SK-N-SH (cell line): ENCODE measurements at regions of chr1 and their contacts with region 1.

Region 1: DNA sequence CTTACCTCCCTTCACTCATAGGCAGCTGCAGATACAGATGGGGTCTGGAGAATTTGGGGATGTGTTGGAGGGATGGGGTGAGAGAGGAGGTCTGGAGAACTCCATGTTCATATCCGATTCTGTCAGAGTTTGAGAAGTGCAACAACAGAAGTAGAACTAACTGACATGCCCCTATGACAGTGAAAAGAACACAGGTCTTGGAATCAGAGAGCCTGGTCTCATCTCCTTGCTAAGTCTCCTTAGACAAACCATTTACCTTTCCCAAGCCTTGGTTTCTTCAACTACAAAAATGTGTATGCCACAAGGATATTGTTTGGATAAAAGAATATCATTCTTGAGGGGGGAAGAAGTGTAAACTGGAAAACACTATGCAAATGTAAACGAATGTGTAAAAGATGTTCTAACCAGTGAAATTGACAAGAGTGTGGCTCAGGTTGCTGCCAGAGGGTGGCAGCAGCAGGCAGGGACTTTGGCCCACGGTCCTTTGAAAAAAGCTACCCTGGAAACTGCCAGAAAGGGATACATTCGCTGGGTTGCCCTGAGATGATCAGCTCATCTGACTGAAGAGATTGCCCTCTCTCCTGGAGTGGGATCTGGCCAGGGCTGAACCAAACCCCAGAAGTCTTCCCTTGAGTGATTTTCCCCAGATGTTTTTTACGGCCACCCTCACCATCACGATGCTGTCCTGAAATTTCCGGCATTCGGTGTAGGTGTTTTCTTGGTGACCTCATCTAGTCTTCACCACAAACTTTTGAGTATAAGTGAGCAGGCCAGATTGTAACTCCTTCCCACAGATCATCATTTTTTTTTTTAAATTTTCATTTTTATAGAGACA is 17.0 kb upstream of the CD2 start:
- DNase-seq: peak; percentile 83
- H3K4me3 ChIP-seq: no peak overlapping the region
- H3K27ac ChIP-seq: no peak overlapping the region
- H3K4me1 ChIP-seq: peaks cover 0 to 10% of the 10 kb centered on the region in 2 experiments; a peak in 2 of 4 replicates
- H3K27me3 ChIP-seq: no peaks in the 10 kb centered on the region
- CTCF ChIP-seq: peak; percentile 78
- EP300 ChIP-seq: no peak
- RAD21 ChIP-seq: peak; percentile 94

Region 2: DNA sequence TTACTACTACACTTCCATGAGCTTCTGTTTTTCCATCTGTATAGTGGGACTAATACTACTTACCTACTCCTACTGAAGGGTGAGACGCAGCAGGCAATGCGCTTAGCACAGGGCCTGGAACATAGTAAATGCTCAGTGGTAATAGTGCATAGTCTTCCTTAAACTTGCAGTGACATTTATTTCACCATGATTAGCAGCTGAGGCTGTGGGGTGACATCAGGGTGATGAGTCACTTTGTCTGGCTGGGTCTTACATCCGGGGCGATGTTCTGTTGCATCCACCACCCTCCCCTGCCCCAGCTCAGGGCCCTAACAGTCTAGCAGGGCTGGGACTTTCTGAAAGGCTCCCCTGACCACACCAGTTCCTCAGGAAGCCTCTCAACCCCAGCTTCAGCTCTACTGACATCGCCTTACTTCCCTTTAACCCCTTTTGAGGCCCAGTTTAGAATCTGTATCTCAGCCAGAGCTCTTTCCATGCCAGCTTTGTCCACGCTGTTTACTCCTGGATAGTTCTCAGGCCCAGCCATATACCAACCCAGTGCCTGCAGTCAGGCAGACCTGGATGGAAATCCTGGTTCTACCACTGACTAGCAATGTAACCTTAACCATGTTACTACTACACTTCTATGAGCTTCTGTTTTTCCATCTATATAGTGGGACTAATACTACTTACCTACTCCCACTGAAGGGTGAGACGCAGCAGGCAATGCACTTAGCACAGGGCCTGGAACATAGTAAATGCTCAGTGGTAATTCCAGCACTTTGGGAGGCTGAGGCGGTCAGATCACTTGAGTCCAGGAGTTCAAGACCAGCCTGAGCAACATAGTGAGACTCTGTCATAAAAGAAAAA is 232.7 kb before region 1 on chr1:
- CTCF ChIA-PET with region 1: no interaction called
- POLR2A ChIA-PET with region 1: no interaction called
- DNase-seq: no peak
- H3K4me3 ChIP-seq: no peak overlapping the region
- H3K27ac ChIP-seq: peak overlapping the region in 1 of 2 experiments; percentile 50; a peak in 3 of 4 replicates
- H3K4me1 ChIP-seq: peaks cover 7 to 21% of the 10 kb centered on the region in 2 experiments; a peak in 3 of 4 replicates
- H3K27me3 ChIP-seq: no peaks in the 10 kb centered on the region
- CTCF ChIP-seq: no peak
- EP300 ChIP-seq: no peak
- RAD21 ChIP-seq: no peak

Region 3: DNA sequence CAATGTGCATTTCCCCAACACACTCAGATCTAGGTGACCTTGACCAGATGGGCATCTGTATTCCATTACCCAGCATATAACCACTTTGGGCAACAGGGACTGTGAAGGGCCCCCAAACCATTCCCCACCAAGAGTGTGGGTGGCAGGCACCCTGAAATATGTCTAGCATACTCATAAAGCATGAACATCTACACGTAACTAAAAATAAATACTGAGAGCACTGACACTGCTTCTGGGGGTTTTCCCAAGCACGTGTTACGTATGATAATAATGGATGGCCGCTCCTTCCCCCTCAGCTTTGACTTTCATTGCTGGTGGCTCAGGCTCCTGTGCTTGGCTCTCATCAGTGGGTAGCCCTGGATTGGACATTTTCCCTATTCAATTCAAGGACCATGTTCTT is 108.8 kb before region 1 on chr1:
- CTCF ChIA-PET with region 1: no interaction called
- POLR2A ChIA-PET with region 1: no interaction called
- DNase-seq: no peak
- H3K4me3 ChIP-seq: no peak overlapping the region
- H3K27ac ChIP-seq: peak overlapping the region in 1 of 2 experiments; percentile 39; a peak in 1 of 4 replicates
- H3K4me1 ChIP-seq: peaks cover 0 to 47% of the 10 kb centered on the region in 2 experiments; a peak in 1 of 4 replicates
- H3K27me3 ChIP-seq: no peaks in the 10 kb centered on the region
- CTCF ChIP-seq: no peak
- EP300 ChIP-seq: no peak
- RAD21 ChIP-seq: no peak

Region 4: DNA sequence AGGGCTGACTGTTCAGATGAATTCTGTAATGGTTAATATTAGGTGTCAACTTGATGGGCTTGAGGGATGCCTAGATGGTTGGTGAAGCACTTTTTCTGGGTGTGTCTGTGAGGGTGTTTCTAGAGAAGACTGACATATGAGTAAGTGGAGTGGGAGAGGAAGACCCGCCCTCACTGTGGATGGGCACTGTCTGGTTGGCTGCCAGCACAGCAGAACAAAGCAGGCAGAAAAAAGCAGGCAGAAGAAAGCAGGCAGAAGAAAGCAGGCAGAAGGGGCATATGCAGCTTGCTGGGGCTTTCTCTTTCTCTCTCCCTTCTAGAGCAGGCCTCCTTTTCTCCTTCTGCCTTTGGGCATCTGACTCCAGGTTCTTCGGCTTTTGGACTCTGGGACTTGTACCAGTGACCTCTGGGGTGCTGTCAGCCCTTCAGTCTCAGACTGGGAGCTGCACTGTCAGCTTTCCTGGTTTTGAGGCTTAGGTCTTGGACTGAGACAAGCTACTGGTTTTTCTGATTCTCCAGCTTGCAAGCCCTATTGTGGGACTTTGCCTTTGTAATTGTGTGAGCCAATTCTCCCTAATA is 25.9 kb before region 1 on chr1:
- CTCF ChIA-PET with region 1: interaction called, 10 read pairs
- POLR2A ChIA-PET with region 1: no interaction called
- DNase-seq: peak; percentile 48
- H3K4me3 ChIP-seq: no peak overlapping the region
- H3K27ac ChIP-seq: peak overlapping the region in 1 of 2 experiments; percentile 75; a peak in 1 of 4 replicates
- H3K4me1 ChIP-seq: peaks cover 0 to 38% of the 10 kb centered on the region in 2 experiments; a peak in 3 of 4 replicates
- H3K27me3 ChIP-seq: no peaks in the 10 kb centered on the region
- CTCF ChIP-seq: no peak
- EP300 ChIP-seq: no peak
- RAD21 ChIP-seq: no peak

Region 5: DNA sequence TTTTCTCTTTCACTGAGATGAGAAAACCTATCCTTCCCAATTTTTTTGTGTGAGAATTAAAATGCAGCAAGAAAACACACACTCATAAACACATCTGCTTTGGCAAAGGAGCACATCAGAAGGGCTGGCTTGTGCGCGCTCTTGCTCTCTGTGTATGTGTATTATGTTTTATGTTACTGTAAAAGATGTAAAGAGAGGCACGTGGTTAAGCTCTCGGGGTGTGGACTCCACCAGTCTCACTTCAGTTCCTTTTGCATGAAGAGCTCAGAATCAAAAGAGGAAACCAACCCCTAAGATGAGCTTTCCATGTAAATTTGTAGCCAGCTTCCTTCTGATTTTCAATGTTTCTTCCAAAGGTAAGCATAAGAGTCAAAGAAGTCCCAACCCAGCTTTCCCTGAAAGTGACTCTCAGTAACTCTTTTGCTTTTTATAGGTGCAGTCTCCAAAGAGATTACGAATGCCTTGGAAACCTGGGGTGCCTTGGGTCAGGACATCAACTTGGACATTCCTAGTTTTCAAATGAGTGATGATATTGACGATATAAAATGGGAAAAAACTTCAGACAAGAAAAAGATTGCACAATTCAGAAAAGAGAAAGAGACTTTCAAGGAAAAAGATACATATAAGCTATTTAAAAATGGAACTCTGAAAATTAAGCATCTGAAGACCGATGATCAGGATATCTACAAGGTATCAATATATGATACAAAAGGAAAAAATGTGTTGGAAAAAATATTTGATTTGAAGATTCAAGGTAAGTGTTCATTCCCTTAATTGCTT is 17.2 kb after region 1 on chr1 and contains the start of gene CD2:
- CTCF ChIA-PET with region 1: interaction called, 16 read pairs
- POLR2A ChIA-PET with region 1: no interaction called
- DNase-seq: no peak
- H3K4me3 ChIP-seq: no peak within 1 kb of the TSS
- H3K27ac ChIP-seq: no peak within 1 kb of the TSS
- H3K4me1 ChIP-seq: no peaks in the 10 kb centered on the region
- H3K27me3 ChIP-seq: no peaks in the 10 kb centered on the region
- CTCF ChIP-seq: no peak
- EP300 ChIP-seq: no peak
- RAD21 ChIP-seq: no peak
- polyA plus RNA-seq, gene CD2: not detected in 2 replicates

Region 6: GRCh38 chr1:116878804-116879477 is 141.7 kb after region 1 on chr1:
- CTCF ChIA-PET with region 1: interaction called, 11 read pairs
- POLR2A ChIA-PET with region 1: no interaction called
- DNase-seq: peak; percentile 71
- H3K4me3 ChIP-seq: peak overlapping the region; percentile 41 to 56
- H3K27ac ChIP-seq: peak overlapping the region; percentile 80 to 99
- H3K4me1 ChIP-seq: peaks cover 14 to 22% of the 10 kb centered on the region in 2 experiments
- H3K27me3 ChIP-seq: no peaks in the 10 kb centered on the region
- CTCF ChIP-seq: no peak
- EP300 ChIP-seq: peak in 1 of 2 experiments; percentile 46; a peak in 1 of 4 replicates
- RAD21 ChIP-seq: peak; percentile 61

Region 7: DNA sequence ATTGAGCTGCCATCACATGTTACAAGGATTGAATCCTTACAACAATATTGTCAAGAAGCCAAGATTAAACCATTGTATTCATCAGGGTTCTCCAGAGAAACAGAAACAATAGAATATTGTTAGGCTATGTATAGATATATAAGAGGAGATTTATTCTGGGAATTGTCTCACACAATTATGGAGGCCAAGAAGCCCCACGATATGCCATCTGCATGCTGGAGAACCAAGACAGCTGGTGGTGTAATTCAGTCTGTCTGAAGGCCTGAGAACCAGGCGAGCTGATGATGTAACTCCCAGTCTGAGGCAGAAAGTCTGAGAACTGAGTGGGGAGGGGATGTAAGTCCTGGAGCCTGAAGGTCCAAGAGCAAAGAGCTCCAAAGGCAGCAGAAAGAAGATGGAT is 308.4 kb after region 1 on chr1:
- CTCF ChIA-PET with region 1: interaction called, 10 read pairs
- POLR2A ChIA-PET with region 1: no interaction called
- DNase-seq: no peak
- H3K4me3 ChIP-seq: no peak overlapping the region
- H3K27ac ChIP-seq: no peak overlapping the region
- H3K4me1 ChIP-seq: no peaks in the 10 kb centered on the region
- H3K27me3 ChIP-seq: no peaks in the 10 kb centered on the region
- CTCF ChIP-seq: no peak
- EP300 ChIP-seq: no peak
- RAD21 ChIP-seq: no peak